ENCODE measurements at regions of chr6 and their contacts with region 1.

Region 1: DNA sequence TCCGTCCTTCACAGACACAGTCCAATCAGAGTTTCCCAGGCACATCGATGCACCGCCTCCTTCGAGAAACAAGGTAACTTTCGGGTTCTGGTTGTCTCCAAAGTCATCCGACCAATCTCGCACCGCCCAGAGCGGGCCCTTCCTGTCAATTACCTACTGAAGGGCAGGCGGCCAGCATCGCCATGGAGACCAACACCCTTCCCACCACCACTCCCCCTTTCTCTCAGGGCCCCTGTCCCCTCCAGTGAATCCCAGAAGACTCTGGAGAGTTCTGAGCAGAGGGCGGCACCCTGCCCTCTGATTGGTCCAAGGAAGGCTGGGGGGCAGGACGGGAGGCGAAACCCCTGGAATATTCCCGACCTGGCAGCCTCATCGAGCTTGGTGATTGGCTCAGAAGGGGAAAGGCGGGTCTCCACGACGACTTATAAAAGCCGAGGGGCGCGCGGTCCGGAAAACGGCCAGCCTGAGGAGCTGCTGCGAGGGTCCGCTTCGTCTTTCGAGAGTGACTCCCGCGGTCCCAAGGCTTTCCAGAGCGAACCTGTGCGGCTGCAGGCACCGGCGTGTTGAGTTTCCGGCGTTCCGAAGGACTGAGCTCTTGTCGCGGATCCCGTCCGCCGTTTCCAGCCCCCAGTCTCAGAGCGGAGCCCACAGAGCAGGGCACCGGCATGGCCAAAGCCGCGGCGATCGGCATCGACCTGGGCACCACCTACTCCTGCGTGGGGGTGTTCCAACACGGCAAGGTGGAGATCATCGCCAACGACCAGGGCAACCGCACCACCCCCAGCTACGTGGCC is at the start of gene HSPA1B:
- DNase-seq: peak; percentile 100
- ATAC-seq: peak; percentile 89
- H3K4me3 ChIP-seq: peak within 1 kb of the TSS; percentile 59 to 91 (median 86)
- H3K27ac ChIP-seq: peak within 1 kb of the TSS; percentile 68
- H3K4me1 ChIP-seq: peaks cover 44% of the 10 kb centered on the region
- H3K27me3 ChIP-seq: no peaks in the 10 kb centered on the region; a peak in 1 of 5 replicates
- CTCF ChIP-seq: peak; percentile 29
- EP300 ChIP-seq: peak in 1 of 2 experiments; percentile 82; a peak in 2 of 4 replicates
- POLR2A ChIP-seq: peak; percentile 100
- RAD21 ChIP-seq: peak; percentile 76
- total RNA-seq, gene HSPA1B: 186 and 189 TPM in 2 replicates

Region 2: DNA sequence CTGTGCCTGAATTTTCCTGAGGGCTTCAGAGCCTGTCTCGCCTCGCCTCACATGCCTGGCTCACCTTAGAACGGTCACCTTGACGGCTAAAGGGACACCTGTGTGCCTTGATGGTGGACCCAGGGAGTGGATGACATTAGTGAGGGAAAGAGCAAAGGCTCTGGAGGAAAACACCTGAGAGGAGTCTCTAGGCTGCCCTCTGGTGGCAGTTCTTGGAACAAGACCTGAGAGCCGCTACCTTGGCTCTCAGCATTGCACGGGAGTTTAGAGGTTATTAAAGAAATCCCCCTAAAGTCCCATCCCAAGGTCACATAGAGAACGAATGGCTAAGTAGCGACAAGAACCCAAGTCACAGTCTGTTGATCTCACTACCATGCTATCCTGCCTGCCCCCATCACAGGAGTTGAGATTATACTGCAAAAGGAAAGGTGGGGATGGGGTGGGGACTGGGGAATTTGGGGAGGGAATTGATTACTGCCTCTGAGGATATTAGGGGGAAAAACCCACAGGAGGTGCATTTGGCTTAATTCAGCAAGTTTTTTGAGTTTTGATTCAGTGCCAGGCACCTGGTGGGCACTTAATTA is 699.3 kb before region 1 on chr6:
- CTCF ChIA-PET with region 1: no interaction called
- POLR2A ChIA-PET with region 1: no interaction called
- in situ Hi-C with region 1: no loop called
- intact Hi-C with region 1: no loop called
- DNase-seq: peak; percentile 48
- ATAC-seq: peak; percentile 65
- H3K4me3 ChIP-seq: no peak overlapping the region
- H3K27ac ChIP-seq: no peak overlapping the region
- H3K4me1 ChIP-seq: peaks cover under 1% of the 10 kb centered on the region; the same call in 1 of the 2 replicates
- H3K27me3 ChIP-seq: peaks cover 0 to 37% of the 10 kb centered on the region in 2 experiments; a peak in 3 of 5 replicates
- CTCF ChIP-seq: peak; percentile 83
- EP300 ChIP-seq: no peak
- POLR2A ChIP-seq: no peak
- RAD21 ChIP-seq: 0 out of 2 replicates have a peak, but pooled peaks have one; percentile 36

Region 3: GRCh38 chr6:31665501-31666336 is 161.8 kb before region 1 on chr6 and contains the start of gene CSNK2B:
- CTCF ChIA-PET with region 1: no interaction called
- POLR2A ChIA-PET with region 1: interaction called, 15 read pairs
- in situ Hi-C with region 1: no loop called
- intact Hi-C with region 1: loop called (anchors 5 kb)
- DNase-seq: peak; percentile 99
- ATAC-seq: peak; percentile 83
- H3K4me3 ChIP-seq: peak within 1 kb of the TSS; percentile 93 to 98 (median 94)
- H3K27ac ChIP-seq: peak within 1 kb of the TSS; percentile 99
- H3K4me1 ChIP-seq: peaks cover 71% of the 10 kb centered on the region
- H3K27me3 ChIP-seq: no peaks in the 10 kb centered on the region; a peak in 1 of 5 replicates
- CTCF ChIP-seq: peak; percentile 21
- EP300 ChIP-seq: 0 out of 4 replicates have a peak, but pooled peaks of 1 of the 2 experiments have one; percentile 1
- POLR2A ChIP-seq: peak in 1 of 2 experiments; percentile 98; a peak in 2 of 4 replicates
- RAD21 ChIP-seq: peak; percentile 8; the same call in 1 of the 2 replicates
- total RNA-seq, gene CSNK2B: 296 and 316 TPM in 2 replicates

Region 4: GRCh38 chr6:31723245-31723979 is 104.1 kb before region 1 on chr6 and contains the start of gene MPIG6B:
- CTCF ChIA-PET with region 1: no interaction called
- POLR2A ChIA-PET with region 1: interaction called, 12 read pairs
- in situ Hi-C with region 1: no loop called
- intact Hi-C with region 1: no loop called
- DNase-seq: no peak
- ATAC-seq: peak; percentile 7
- H3K4me3 ChIP-seq: no peak within 1 kb of the TSS
- H3K27ac ChIP-seq: no peak within 1 kb of the TSS
- H3K4me1 ChIP-seq: no peaks in the 10 kb centered on the region
- H3K27me3 ChIP-seq: peaks cover 2 to 35% of the 10 kb centered on the region in 2 experiments; a peak in 4 of 5 replicates
- CTCF ChIP-seq: no peak
- EP300 ChIP-seq: no peak
- POLR2A ChIP-seq: no peak
- RAD21 ChIP-seq: no peak
- total RNA-seq, gene MPIG6B: not detected in 2 replicates

Region 5: GRCh38 chr6:31769684-31770371 is 57.7 kb before region 1 on chr6:
- CTCF ChIA-PET with region 1: interaction called, 16 read pairs
- POLR2A ChIA-PET with region 1: interaction called, 60 read pairs
- in situ Hi-C with region 1: loop called (anchors 5 kb)
- intact Hi-C with region 1: loop called (anchors 1 kb)
- DNase-seq: peak; percentile 71
- ATAC-seq: peak; percentile 61
- H3K4me3 ChIP-seq: no peak overlapping the region
- H3K27ac ChIP-seq: no peak overlapping the region
- H3K4me1 ChIP-seq: peaks cover 44% of the 10 kb centered on the region
- H3K27me3 ChIP-seq: no peaks in the 10 kb centered on the region
- CTCF ChIP-seq: peak; percentile 98
- EP300 ChIP-seq: no peak
- POLR2A ChIP-seq: no peak
- RAD21 ChIP-seq: peak; percentile 96

Region 6: DNA sequence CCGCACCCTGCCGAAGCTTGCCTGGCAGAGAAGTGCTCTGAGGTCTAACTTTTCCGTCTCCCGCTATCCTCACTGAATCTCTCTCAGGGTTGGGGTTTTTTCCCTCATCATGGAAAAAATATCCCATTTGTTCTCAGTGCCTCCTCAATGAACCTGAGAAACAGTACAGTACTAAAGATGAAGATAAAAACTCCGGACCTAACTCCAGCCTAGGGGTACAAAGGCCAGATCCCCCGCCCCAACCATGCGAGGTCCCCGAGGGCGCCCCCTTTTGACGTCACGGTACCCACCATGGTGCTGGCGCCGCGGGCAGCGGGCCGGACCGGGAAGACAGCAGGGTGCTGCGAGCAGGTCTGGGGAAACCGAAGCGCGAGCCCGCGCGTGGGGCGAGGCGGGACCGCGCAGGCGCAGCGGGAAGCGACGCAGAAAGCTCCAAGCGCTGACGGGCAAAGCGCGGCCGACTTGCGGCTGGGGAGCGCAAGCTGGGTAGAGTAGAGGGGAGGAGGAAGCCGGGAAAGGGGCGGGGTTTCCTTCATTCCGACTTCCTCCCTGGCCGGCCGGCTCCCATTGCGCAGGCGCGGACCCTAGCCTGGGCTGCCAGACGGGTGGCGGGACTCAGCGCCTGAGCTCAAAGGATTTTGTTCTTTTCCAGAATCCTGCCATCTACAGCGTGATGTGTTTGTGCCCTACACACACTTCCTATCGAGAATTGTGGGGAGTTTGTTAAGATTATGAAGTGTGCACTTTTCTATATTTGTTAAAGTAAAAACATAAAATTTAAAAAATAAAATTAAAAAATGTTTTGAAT is 20.8 kb before region 1 on chr6 and contains the start of gene LSM2:
- CTCF ChIA-PET with region 1: no interaction called
- POLR2A ChIA-PET with region 1: interaction called, 107 read pairs
- in situ Hi-C with region 1: no loop called
- intact Hi-C with region 1: no loop called
- DNase-seq: peak; percentile 96
- ATAC-seq: peak; percentile 92
- H3K4me3 ChIP-seq: peak within 1 kb of the TSS; percentile 82 to 90 (median 84)
- H3K27ac ChIP-seq: peak within 1 kb of the TSS; percentile 94
- H3K4me1 ChIP-seq: peaks cover 37% of the 10 kb centered on the region
- H3K27me3 ChIP-seq: no peaks in the 10 kb centered on the region
- CTCF ChIP-seq: peak; percentile 89
- EP300 ChIP-seq: peak in 1 of 2 experiments; percentile 43; a peak in 2 of 4 replicates
- POLR2A ChIP-seq: peak; percentile 75 to 89
- RAD21 ChIP-seq: peak; percentile 69
- total RNA-seq, gene LSM2: 90.5 and 93.7 TPM in 2 replicates

Region 7: GRCh38 chr6:31933537-31933936 is 106.1 kb after region 1 on chr6:
- CTCF ChIA-PET with region 1: no interaction called
- POLR2A ChIA-PET with region 1: no interaction called
- in situ Hi-C with region 1: no loop called
- intact Hi-C with region 1: no loop called
- DNase-seq: no peak
- ATAC-seq: no peak; the same call in 2 of the 3 replicates
- H3K4me3 ChIP-seq: no peak overlapping the region
- H3K27ac ChIP-seq: peak overlapping the region; percentile 31
- H3K4me1 ChIP-seq: peaks cover 25% of the 10 kb centered on the region
- H3K27me3 ChIP-seq: no peaks in the 10 kb centered on the region
- CTCF ChIP-seq: no peak
- EP300 ChIP-seq: no peak
- POLR2A ChIP-seq: no peak
- RAD21 ChIP-seq: no peak

Region 8: DNA sequence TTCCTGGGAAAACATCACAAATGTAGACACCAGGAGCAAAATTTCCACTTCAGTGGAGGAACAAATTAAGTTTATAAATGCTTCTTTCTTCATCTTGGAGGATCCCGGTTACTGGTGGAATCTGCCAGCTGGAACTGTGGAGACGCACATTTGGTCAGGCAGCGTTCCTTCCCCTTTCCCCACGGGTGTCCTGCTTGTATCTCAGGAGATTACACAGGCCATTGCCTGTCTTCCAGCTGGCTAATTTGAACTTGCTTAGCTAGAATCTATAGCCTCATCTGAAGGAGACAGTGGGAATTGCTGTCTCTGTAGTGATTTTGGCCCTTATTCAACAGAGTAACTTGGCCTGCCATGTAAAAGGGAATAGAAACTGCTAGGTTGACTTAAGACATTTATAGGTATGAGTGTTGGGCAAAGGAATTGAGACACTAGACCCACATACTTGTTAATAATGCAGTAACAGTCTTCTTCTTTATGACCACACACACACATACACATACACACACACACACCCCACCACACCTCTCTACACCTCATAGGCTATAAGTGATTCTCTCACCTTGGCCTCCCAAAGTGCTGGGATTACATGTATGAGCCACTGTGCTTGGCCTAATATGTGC is 509.8 kb after region 1 on chr6:
- CTCF ChIA-PET with region 1: no interaction called
- POLR2A ChIA-PET with region 1: no interaction called
- in situ Hi-C with region 1: no loop called
- intact Hi-C with region 1: no loop called
- DNase-seq: no peak
- ATAC-seq: no peak
- H3K4me3 ChIP-seq: no peak overlapping the region
- H3K27ac ChIP-seq: no peak overlapping the region
- H3K4me1 ChIP-seq: no peaks in the 10 kb centered on the region
- H3K27me3 ChIP-seq: peaks cover 0 to 24% of the 10 kb centered on the region in 2 experiments; a peak in 2 of 5 replicates
- CTCF ChIP-seq: no peak
- EP300 ChIP-seq: no peak
- POLR2A ChIP-seq: no peak
- RAD21 ChIP-seq: no peak

Measured in HepG2 (cell line).